ENCODE measurements at regions of chr4 and their contacts with region 1.

Region 1: DNA sequence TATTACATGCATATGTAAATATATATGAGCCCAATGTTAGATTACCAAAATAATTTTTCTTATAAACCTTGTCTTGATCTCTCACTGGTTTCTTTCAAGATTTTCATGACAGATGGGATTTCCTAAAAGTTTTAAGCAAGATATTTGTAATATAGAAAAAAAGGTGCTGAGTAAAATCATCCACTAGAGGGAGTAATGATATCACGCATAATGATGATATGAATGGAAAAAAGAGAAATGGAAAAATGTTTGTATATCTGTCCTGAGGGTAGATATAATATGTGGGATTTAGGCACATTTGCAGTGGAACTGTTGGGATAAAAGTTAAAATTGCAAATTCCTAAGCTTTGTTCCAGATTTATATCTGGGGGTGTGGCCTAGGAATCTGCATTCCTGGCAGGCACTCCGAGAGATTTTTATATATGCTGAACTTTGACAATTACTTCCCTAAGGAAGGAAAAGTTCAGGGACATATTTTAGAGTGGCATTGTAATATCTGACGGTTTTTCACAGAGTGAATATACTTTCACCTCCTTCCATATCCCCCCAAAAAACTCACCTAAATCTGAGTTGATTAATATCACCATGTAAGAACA is 60.5 kb downstream of the TMA16 start:
- DNase-seq: no peak
- ATAC-seq: no peak

Region 2: DNA sequence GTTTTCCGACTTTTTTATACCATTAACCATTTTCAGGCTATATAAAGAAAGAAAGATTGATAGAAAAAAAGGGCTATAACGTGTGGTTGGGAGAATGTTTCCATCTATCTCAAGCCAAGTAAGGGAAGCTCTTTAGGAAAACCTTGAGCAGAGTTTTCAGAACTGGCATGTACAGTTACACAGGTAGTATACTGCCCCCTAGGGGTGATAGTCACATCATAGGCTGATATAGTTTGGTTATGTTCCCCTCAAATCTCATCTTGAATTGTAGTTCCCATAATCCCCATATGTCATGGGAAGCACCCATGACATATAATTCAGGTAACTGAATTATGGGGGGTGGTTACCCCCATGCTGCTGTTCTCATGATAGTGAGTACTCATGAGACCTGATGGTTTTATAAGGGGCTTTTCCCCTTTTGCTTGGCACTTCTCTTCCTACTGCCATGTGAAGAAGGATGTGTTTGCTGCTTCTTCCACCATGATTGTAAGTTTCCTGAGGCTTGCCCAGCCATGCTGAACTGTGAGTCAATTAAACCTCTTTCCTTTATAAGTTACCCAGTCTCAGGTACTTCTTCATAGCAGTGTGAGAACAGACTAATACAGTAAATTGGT is 126.3 kb after region 1 on chr4:
- intact Hi-C with region 1: loop called in 1 of 2 experiments (anchors 5 kb)
- DNase-seq: no peak
- ATAC-seq: no peak

Region 3: GRCh38 chr4:164725066-164725465 is 1170.1 kb after region 1 on chr4:
- intact Hi-C with region 1: loop called (anchors 5 to 10 kb)
- DNase-seq: no peak
- ATAC-seq: no peak

Region 4: GRCh38 chr4:164731827-164732474 is 1177.0 kb after region 1 on chr4:
- intact Hi-C with region 1: loop called (anchors 5 to 10 kb)
- DNase-seq: no peak
- ATAC-seq: peak in 1 of 2 donors; percentile 53

Region 5: DNA sequence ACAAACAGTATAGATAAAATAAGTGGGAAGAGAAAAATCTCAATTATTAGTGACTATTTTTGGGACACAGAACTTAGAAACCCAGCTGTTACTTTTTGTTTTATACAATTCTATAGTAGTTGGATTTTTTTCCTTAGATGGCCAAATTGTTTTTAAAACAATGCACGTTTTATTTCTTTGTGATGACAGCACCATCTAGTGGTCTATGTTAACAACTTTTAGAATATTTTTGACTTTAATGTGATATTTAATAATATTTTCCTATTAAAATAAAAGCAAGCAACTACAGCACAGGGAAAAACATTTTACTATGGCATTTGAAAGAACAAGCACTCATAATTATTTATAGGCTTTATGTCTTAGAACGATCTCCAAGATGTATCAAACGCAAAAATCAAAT is 1193.4 kb after region 1 on chr4:
- intact Hi-C with region 1: loop called (anchors 5 to 10 kb)
- DNase-seq: no peak
- ATAC-seq: no peak

Measured in left cardiac atrium (tissue), 4 donors.